ENCODE measurements at regions of chr6 and their contacts with region 1.

Region 1: GRCh38 chr6:110815217-110816109 is at the start of gene CDK19:
- DNase-seq: peak; percentile 100
- total RNA-seq, gene CDK19: 8.3 TPM

Region 2: DNA sequence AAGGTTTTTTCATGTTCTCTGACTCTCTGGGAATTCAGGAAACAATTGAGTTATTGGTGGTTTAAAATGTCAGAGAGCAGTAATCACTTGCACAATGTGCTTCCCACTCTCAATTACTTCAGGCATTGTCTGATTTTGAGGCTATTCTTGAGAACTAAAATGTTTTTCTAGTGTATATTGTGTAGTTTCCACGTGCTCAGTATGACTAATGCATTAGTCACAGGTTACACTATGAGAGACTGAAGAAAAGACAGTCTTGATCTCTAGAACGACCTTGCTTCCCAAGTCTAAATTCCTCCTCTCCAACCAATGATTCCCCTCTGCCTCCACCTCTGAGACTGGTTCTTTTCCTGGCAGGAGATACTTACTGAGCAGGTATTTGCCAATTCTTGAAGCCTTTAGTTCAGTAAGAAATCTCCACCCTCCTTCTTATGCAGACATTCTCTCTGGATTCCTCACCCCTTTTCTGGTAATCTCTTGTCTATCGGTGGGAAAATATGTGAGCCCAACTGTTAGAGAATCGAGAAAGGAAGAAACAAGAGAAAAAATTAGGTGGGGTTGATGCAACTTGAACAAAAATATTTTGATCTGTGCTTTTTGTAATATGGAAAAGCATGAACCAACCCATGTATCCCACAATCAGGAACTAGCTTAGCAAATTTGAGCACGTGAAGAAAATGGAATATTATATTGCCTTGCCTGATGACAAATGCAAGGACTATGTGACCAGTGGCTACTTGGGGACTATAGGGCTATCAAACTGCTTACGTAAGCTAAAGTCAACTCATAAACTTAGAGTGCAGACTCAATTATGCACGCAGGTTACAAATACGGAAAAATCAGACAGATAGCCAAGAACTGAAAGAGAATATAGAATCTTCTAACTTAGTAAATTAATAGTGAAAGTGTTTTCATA is 278.0 kb before region 1 on chr6:
- intact Hi-C with region 1: loop called (anchors 10 kb)
- DNase-seq: no peak

Region 3: DNA sequence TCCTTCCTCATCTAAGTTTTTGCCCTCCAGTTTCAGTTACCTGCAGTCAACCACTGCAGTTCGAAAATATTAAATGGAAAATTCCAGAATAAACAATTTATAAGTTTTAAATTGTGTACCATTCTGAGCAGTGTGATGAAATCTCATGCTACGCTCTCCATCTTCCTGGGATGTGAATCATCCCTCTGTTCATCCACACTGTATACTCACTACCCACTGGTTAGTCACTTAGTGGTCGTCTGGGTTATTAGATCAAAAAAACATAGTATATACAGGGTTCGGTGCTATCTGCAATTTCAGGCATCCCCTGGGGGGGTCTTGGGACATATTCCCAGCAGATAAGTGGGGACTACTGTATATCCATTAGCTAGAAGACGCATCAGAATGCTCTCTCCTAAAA is 187.1 kb before region 1 on chr6:
- intact Hi-C with region 1: no loop called
- DNase-seq: no peak

Region 4: GRCh38 chr6:110682460-110682853 is 133.0 kb before region 1 on chr6:
- intact Hi-C with region 1: loop called (anchors 5 kb)
- DNase-seq: no peak

Region 5: DNA sequence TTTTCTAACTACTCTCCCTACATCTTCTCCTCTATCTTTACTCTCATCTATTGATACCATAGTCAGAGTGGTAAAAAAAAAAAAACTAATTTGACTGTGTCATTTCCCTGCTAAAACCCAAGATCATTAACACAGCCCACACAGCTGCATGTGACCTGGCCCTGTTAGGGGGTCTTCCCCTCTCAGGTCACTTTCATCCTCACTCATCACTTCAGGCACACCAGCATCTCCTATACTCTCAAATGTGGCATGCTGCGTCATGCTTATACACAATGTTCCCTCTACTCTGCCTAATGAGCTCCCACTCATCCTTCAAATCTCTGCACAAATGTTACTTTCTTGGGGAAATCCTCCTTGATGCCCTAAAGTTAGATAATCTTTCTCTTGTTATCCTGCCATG is 87.0 kb before region 1 on chr6:
- intact Hi-C with region 1: no loop called
- DNase-seq: no peak

Region 6: GRCh38 chr6:110902091-110902490 is 86.6 kb after region 1 on chr6:
- intact Hi-C with region 1: no loop called
- DNase-seq: no peak

Region 7: DNA sequence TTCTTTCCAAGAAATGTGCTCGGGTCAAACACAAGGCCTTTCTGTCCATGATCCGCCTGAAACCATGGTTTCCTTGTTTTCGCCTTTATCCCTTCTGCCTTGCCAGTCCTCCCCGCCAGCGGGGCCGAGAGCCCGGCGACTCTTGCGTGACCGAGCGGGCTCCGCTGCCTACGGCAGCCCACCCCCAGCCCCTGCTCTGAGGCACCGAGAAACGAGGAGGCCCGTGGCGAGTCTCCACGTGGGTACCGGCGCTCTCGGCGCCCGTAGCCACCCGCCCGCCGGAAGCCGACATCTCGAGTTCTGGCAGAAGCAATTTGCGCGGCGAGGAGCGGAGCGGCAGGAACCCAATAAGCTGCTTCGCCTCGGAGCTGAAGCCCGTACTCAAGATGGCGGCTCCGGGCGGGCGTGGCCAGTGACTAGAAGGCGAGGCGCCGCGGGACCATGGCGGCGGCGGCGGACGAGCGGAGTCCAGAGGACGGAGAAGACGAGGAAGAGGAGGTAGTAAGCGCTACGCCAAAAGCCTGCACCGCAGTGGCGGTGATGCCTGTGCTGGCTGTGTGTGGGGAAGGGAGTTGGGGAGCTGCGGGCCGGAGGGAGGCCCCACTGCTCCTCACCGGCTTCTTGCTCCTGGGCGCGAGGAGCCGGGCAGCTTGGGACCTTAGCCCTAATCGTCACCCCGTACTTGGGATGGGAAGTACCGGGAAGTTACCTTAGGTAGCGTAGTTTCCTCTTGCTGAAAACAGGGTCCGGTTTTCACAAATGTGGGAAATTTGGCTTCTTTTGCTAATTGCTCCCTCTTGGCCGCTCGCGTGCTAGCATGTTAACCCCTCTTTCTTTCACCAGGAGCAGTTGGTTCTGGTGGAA is 143.1 kb after region 1 on chr6 and contains the start of gene GTF3C6:
- intact Hi-C with region 1: loop called (anchors 2 kb)
- DNase-seq: peak; percentile 97
- total RNA-seq, gene GTF3C6: 96.6 TPM

Region 8: GRCh38 chr6:110990840-110991576 is 175.5 kb after region 1 on chr6:
- intact Hi-C with region 1: no loop called
- DNase-seq: no peak